Activated CD4-positive, alpha-beta T cell treated with anti-CD3 and anti-CD28 coated beads for 36 hours (primary cell): ENCODE measurements at regions of chr3 and their contacts with region 1.

Region 1: DNA sequence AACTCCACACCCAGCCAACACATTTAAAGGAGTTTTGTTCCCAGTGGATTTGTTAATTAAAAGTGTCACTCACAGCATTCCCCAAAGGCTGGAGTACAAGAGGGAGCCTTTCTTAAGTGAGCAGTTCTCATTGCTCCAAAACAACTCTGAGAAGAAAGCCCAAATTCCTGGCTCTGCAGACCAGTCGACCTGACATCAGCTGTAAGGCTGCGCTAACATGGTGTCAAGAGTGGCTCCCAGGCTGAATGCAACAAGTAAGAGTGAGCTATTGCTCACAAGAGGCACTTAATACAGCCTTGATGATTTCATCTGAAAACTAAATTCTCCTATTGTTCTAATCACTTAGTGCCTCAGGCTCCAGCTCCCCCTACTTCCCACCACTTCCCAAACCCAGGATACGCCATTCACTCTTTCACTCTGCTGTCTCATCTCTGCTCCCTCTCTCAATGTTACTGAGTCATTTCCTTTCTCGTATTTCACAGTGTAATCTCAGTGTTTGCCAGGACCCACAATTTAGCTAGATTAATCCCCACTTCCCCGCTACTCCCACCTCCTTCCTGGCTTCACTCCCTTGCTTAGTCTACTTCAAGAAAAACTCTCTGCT is 81.8 kb downstream of the WWTR1 start:
- DNase-seq: peak; percentile 19
- ATAC-seq: peak; percentile 54
- H3K4me3 Mint-ChIP-seq: no peak overlapping the region
- H3K27ac Mint-ChIP-seq: no peak overlapping the region
- H3K4me1 Mint-ChIP-seq: peaks cover 39% of the 10 kb centered on the region
- H3K27me3 Mint-ChIP-seq: peaks cover 3% of the 10 kb centered on the region

Region 2: DNA sequence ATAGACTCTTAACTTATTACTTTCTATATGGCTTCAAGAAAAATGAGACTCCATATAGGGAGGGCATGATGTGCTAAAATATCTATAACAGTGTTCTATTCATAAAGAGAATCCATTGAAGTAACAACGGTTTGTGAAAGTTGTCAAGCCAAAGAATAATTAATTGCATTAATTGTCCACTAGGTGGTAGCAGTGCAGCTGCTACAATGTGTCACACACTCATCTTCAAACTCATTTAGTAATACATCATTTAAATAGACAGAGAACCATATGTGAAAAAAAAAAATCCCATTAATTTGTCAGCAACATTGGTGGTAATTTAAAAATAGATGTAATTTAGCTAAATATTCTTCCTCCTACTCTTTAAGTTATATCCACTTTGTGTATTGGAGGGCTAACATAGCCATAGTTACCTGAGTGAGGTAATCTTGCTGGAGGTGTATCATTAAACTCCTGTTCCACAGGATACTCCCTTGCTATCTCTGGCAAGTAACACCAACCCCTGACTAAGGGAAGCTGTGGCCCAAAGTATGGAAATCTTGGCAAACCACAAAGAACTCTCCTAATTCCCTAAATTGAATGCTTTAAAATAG is 714.7 kb before region 1 on chr3:
- CTCF ChIA-PET with region 1: no interaction called
- POLR2A ChIA-PET with region 1: no interaction called
- intact Hi-C with region 1: no loop called
- DNase-seq: no peak
- ATAC-seq: peak; percentile 60
- H3K4me3 Mint-ChIP-seq: no peak overlapping the region
- H3K27ac Mint-ChIP-seq: no peak overlapping the region
- H3K4me1 Mint-ChIP-seq: no peaks in the 10 kb centered on the region
- H3K27me3 Mint-ChIP-seq: peaks cover 10% of the 10 kb centered on the region

Region 3: GRCh38 chr3:149657926-149658733 is 82.1 kb after region 1 on chr3 and contains the start of gene WWTR1:
- CTCF ChIA-PET with region 1: no interaction called
- POLR2A ChIA-PET with region 1: no interaction called
- intact Hi-C with region 1: loop called in 1 of 2 experiments (anchors 5 kb)
- DNase-seq: peak; percentile 61
- ATAC-seq: peak; percentile 71
- H3K4me3 Mint-ChIP-seq: peak within 1 kb of the TSS; percentile 69
- H3K27ac Mint-ChIP-seq: peak within 1 kb of the TSS; percentile 57
- H3K4me1 Mint-ChIP-seq: peaks cover 12% of the 10 kb centered on the region
- H3K27me3 Mint-ChIP-seq: peaks cover 50% of the 10 kb centered on the region
- total RNA-seq, gene WWTR1: 0.46 to 0.54 TPM